ENCODE measurements at regions of chr20 and their contacts with region 1.

Region 1: GRCh38 chr20:50575847-50576720 is 65.9 kb downstream of the PTPN1 start:
- DNase-seq: peak; percentile 78
- H3K4me3 Mint-ChIP-seq: no peak overlapping the region
- H3K27ac Mint-ChIP-seq: peak overlapping the region; percentile 38
- H3K4me1 Mint-ChIP-seq: peaks cover 47% of the 10 kb centered on the region
- H3K27me3 Mint-ChIP-seq: no peaks in the 10 kb centered on the region

Region 2: DNA sequence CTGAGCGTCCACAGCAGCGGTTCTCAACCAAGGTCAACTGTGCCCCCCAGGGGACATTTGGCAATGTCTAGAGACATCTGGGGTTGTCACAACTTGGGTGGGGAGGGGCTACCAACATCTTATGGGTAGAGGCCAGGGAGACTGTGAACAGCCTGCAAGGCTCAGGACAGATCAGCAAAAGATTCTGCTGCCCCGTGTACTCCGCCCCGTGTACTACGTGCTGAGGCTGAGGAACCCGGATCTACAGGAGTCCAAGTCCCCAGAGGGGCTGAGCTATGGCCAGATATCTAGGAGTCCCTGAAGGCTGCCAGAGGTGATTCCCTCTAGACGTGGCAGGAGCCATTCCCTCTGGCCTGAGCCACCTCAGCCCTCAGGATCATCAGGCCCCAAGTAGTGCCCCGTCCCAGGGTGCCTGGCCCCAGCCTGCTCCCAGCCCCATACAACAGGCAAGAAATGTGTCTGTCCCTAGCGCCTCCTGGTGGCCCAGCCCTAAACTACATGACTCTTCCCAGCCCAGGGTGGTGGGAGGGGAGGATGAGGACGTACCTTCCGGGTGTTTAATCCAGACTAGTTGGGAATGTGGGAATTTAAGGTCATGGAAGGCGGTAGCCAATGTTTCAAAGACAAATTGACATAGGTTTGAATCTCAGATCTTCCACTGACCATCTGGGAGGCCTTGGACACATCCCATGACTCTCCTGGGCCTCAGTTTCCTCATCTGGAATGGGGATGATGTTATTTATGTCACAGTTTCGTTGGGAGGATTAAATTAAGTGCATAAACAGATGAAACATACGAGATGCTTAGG is 115.4 kb before region 1 on chr20:
- CTCF ChIA-PET with region 1: interaction called, 31 read pairs
- POLR2A ChIA-PET with region 1: no interaction called
- intact Hi-C with region 1: no loop called
- DNase-seq: peak; percentile 90
- H3K4me3 Mint-ChIP-seq: no peak overlapping the region
- H3K27ac Mint-ChIP-seq: no peak overlapping the region
- H3K4me1 Mint-ChIP-seq: peaks cover 8% of the 10 kb centered on the region
- H3K27me3 Mint-ChIP-seq: peaks cover 12% of the 10 kb centered on the region

Region 3: DNA sequence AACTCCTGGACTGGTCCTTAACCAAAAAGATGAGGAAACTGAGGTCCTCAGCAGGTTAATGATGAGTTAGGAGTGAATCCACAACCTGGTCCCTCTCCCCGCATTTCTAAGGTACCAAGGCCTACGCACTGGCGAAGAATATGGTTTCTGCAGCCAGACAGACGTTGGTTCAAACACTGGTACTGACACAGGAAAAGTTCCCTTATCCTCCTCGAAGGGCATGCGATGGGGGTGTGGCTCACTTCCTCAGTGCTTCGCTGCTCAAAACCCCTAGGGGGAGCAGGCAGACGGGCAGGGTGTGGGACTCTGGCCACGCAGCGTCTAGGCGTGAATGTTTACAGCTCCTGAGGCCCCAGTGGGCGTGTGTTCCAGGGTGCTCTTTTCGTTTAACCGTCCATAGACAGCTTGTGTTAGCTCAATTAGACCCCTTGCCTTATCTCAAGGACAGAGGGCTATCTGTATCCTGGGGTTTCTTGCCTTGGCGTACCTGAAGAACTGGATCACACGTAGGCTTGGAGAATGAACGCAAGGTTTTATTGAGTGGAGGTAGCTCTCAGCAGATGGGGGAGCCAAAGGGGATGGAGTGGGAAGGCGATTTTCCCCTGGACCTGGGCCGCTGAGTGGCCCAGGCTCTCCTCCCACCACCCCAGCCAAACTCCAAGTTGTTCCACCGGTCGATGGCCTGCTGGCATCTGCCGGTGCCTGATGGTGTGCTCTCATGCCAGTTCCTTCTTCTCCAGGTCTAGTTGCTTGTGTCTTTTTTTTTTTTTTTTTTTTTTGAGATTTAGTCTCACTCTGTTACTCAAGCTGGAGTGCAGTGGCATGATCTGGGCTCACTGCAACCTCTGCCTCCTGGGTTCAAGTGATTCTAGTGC is 97.7 kb before region 1 on chr20:
- CTCF ChIA-PET with region 1: interaction called, 50 read pairs
- POLR2A ChIA-PET with region 1: interaction called, 4 read pairs
- intact Hi-C with region 1: no loop called
- DNase-seq: peak; percentile 89
- H3K4me3 Mint-ChIP-seq: no peak overlapping the region
- H3K27ac Mint-ChIP-seq: no peak overlapping the region
- H3K4me1 Mint-ChIP-seq: peaks cover 37% of the 10 kb centered on the region
- H3K27me3 Mint-ChIP-seq: no peaks in the 10 kb centered on the region

Region 4: DNA sequence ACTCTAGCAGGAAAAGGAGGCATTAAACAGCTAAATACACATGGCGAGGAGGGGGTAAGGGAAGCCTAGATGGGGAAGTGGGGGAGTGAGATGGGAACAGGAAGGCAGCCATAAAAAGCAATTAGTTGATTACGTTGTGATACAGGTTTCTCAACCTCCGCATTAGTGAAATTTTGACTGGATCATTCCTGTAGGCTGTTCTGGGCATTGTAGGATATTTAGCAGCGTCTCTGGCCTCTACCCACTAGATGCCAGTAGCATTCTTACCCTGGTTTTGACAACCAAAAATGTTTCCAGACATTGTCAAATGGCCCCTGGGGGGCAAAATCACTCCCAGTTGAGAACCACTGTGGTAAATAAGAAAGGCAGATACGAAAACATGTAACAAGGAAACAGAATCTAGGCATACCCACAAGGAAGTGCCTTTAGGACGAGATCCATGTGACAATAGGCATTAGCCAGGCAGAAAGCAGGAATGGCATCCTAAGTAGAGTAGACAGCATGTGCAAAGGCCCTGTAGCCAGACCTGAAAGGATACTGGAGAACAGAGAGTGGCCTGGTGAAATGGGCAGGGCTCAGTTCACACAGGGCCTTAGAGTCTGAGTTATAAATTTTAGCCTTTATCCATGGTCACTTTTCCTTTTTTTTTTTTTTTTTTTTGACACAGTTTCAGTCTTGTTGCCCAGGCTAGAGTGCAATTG is 91.7 kb before region 1 on chr20:
- CTCF ChIA-PET with region 1: interaction called, 50 read pairs
- POLR2A ChIA-PET with region 1: interaction called, 3 read pairs
- intact Hi-C with region 1: no loop called
- DNase-seq: no peak
- H3K4me3 Mint-ChIP-seq: peak overlapping the region; percentile 82
- H3K27ac Mint-ChIP-seq: peak overlapping the region; percentile 93
- H3K4me1 Mint-ChIP-seq: peaks cover 38% of the 10 kb centered on the region
- H3K27me3 Mint-ChIP-seq: no peaks in the 10 kb centered on the region

Region 5: DNA sequence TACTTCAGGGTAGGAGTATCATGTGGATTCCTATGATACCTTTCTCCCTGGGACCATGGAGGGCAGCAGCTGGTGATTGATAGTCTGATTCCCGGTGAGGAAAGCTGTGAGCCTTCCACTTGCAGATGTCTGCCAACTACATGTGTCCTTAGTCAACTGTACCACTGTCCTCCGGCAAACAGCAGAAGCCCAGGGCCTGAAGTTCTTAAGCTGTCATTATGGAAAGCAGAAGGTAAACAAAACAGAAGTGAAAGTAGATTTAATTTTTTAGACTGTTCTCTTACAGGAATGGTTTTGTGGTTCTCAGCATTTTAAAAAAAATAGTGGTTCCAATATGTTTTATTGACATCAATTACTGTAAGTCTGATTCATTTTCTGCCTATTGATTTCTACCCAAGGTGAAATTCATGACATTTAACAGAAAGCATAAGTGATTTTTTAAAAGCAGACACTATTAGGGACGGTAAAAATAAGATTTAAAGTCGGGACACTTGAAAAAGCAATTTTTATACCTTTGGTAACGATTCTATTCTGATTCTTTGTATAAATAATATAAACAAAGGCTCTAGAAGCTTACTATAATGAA is 29.3 kb before region 1 on chr20:
- CTCF ChIA-PET with region 1: interaction called, 12 read pairs
- POLR2A ChIA-PET with region 1: no interaction called
- intact Hi-C with region 1: no loop called
- DNase-seq: peak; percentile 53
- H3K4me3 Mint-ChIP-seq: peak overlapping the region; percentile 73
- H3K27ac Mint-ChIP-seq: peak overlapping the region; percentile 80
- H3K4me1 Mint-ChIP-seq: peaks cover 67% of the 10 kb centered on the region
- H3K27me3 Mint-ChIP-seq: no peaks in the 10 kb centered on the region

Region 6: GRCh38 chr20:50588034-50588611 is 12.0 kb after region 1 on chr20:
- CTCF ChIA-PET with region 1: interaction called, 32 read pairs
- POLR2A ChIA-PET with region 1: no interaction called
- intact Hi-C with region 1: no loop called
- DNase-seq: peak; percentile 84
- H3K4me3 Mint-ChIP-seq: no peak overlapping the region
- H3K27ac Mint-ChIP-seq: no peak overlapping the region
- H3K4me1 Mint-ChIP-seq: peaks cover 3% of the 10 kb centered on the region
- H3K27me3 Mint-ChIP-seq: no peaks in the 10 kb centered on the region

Region 7: GRCh38 chr20:50625986-50626677 is 50.0 kb after region 1 on chr20:
- CTCF ChIA-PET with region 1: no interaction called
- POLR2A ChIA-PET with region 1: no interaction called
- intact Hi-C with region 1: no loop called
- DNase-seq: peak; percentile 51
- H3K4me3 Mint-ChIP-seq: no peak overlapping the region
- H3K27ac Mint-ChIP-seq: no peak overlapping the region
- H3K4me1 Mint-ChIP-seq: no peaks in the 10 kb centered on the region
- H3K27me3 Mint-ChIP-seq: peaks cover 1% of the 10 kb centered on the region

Measured in activated CD4-positive, alpha-beta memory T cell treated with anti-CD3 and anti-CD28 coated beads for 36 hours (primary cell).